HepG2 (cell line): ENCODE measurements at regions of chr12 and their contacts with region 1.

Region 1: GRCh38 chr12:21169878-21170472 is 39.0 kb downstream of the SLCO1B1 start:
- DNase-seq: peak; percentile 37
- ATAC-seq: peak; percentile 73
- H3K4me3 ChIP-seq: no peak overlapping the region
- H3K27ac ChIP-seq: no peak overlapping the region
- H3K4me1 ChIP-seq: no peaks in the 10 kb centered on the region
- H3K27me3 ChIP-seq: no peaks in the 10 kb centered on the region
- CTCF ChIP-seq: peak; percentile 80
- EP300 ChIP-seq: no peak
- POLR2A ChIP-seq: no peak
- RAD21 ChIP-seq: peak; percentile 62

Region 2: DNA sequence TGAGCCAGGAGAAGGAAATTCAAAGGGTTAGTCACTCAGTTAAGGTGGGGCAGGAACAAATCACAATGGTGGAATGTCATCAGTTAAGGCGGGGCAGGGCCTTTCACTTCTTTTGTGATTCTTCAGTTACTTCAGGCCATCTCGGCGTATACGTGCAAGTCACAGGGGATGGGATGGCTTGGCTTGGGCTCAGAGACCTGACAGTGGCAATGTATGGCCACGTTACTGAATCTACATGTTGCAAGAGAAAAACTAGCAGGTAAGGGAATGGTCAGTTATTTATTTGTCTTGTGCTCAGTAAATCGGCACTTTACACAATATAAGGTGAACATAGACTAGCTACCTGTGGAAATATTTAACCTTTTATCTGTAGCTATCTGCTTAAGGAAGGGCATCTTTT is 347.6 kb before region 1 on chr12:
- CTCF ChIA-PET with region 1: no interaction called
- POLR2A ChIA-PET with region 1: no interaction called
- in situ Hi-C with region 1: no loop called
- intact Hi-C with region 1: loop called (anchors 10 kb)
- DNase-seq: no peak
- ATAC-seq: no peak
- H3K4me3 ChIP-seq: no peak overlapping the region
- H3K27ac ChIP-seq: no peak overlapping the region
- H3K4me1 ChIP-seq: no peaks in the 10 kb centered on the region
- H3K27me3 ChIP-seq: no peaks in the 10 kb centered on the region
- CTCF ChIP-seq: no peak
- EP300 ChIP-seq: no peak
- POLR2A ChIP-seq: no peak
- RAD21 ChIP-seq: no peak

Region 3: DNA sequence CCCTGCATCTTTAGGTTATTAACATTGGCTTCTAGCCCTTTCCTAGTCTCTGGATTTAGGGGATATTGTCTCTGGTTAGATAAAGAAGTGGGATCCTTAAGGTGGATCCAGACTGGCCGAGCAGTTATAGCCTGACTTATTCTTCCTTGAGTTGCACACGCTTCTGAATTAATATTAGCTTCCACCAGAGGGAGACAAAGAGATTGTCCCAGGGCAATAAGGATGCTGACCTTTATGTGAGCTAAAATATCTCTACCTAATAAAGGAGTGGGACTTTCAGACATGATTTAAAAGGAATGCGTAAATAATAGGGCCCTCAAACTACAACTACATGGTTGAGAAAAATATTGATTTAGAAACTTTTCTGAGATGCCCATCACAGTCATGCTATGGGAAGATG is 219.7 kb before region 1 on chr12:
- CTCF ChIA-PET with region 1: interaction called, 11 read pairs
- POLR2A ChIA-PET with region 1: no interaction called
- in situ Hi-C with region 1: no loop called
- intact Hi-C with region 1: loop called (anchors 1 kb)
- DNase-seq: peak; percentile 6
- ATAC-seq: peak; percentile 69
- H3K4me3 ChIP-seq: no peak overlapping the region
- H3K27ac ChIP-seq: no peak overlapping the region
- H3K4me1 ChIP-seq: no peaks in the 10 kb centered on the region
- H3K27me3 ChIP-seq: no peaks in the 10 kb centered on the region
- CTCF ChIP-seq: peak; percentile 40; the same call in 1 of the 2 replicates
- EP300 ChIP-seq: no peak
- POLR2A ChIP-seq: no peak
- RAD21 ChIP-seq: no peak